ENCODE measurements at regions of chr12 and their contacts with region 1.

Region 1: GRCh38 chr12:109858764-109859163 is 21.6 kb downstream of the GLTP start:
- DNase-seq: no peak
- H3K4me3 ChIP-seq: no peak overlapping the region
- H3K27ac ChIP-seq: no peak overlapping the region
- H3K4me1 ChIP-seq: no peaks in the 10 kb centered on the region
- CTCF ChIP-seq: no peak

Region 2: GRCh38 chr12:109880016-109880931 is 21.5 kb after region 1 on chr12 and contains the start of gene GLTP:
- CTCF ChIA-PET with region 1: no interaction called
- POLR2A ChIA-PET with region 1: no interaction called
- intact Hi-C with region 1: loop called (anchors 1 kb)
- DNase-seq: peak; percentile 94
- H3K4me3 ChIP-seq: peak within 1 kb of the TSS; percentile 76
- H3K27ac ChIP-seq: no peak within 1 kb of the TSS
- H3K4me1 ChIP-seq: peaks cover 38% of the 10 kb centered on the region
- CTCF ChIP-seq: peak; percentile 57
- total RNA-seq, gene GLTP: 18.6 and 24.0 TPM in 2 replicates

Region 3: GRCh38 chr12:109927622-109928021 is 68.9 kb after region 1 on chr12:
- CTCF ChIA-PET with region 1: interaction called, 4 read pairs
- POLR2A ChIA-PET with region 1: no interaction called
- intact Hi-C with region 1: loop called (anchors 1 kb)
- DNase-seq: peak; percentile 46
- H3K4me3 ChIP-seq: no peak overlapping the region
- H3K27ac ChIP-seq: no peak overlapping the region
- H3K4me1 ChIP-seq: peaks cover 14% of the 10 kb centered on the region
- CTCF ChIP-seq: peak; percentile 77

Region 4: DNA sequence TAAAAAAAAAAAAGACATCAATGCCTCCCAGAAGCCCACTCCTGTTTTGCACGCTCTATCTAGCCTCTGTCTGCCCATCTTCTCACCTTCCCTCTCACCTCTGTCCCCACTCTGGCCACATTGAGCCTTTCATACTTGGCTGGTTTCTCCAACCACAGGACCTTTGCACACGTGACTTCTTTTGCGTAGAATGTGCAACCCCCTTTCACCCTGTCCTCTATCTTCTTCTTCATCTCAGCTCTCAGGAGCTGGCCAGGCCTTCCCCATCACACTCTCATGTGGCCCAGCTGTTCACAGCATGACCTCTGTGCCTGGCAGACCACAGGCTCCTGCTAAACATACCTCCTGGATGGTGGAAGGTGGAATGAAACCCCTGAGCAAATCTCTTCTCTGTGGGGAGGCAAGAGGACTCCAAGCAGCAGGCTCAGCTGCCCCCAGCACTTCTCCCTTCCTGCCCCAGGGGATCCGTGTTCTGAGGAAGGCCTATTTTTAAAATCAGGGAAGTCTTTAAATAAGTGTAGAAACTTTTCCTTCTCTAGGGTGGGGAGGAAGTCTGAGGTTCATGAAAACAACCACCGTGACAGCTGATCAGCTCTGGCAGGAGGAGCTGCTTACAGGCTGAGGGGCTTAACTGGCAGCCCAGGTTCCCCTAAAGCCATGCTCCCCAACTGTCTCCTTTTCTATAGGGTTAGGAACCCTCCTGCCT is 818.6 kb after region 1 on chr12:
- CTCF ChIA-PET with region 1: no interaction called
- POLR2A ChIA-PET with region 1: no interaction called
- intact Hi-C with region 1: no loop called
- DNase-seq: peak; percentile 55
- H3K4me3 ChIP-seq: peak overlapping the region; percentile 23
- H3K27ac ChIP-seq: peak overlapping the region; percentile 51
- H3K4me1 ChIP-seq: peaks cover 68% of the 10 kb centered on the region
- CTCF ChIP-seq: no peak

Measured in OCI-LY7 (cell line).